ENCODE measurements at regions of chr1 and their contacts with region 1.

Region 1: DNA sequence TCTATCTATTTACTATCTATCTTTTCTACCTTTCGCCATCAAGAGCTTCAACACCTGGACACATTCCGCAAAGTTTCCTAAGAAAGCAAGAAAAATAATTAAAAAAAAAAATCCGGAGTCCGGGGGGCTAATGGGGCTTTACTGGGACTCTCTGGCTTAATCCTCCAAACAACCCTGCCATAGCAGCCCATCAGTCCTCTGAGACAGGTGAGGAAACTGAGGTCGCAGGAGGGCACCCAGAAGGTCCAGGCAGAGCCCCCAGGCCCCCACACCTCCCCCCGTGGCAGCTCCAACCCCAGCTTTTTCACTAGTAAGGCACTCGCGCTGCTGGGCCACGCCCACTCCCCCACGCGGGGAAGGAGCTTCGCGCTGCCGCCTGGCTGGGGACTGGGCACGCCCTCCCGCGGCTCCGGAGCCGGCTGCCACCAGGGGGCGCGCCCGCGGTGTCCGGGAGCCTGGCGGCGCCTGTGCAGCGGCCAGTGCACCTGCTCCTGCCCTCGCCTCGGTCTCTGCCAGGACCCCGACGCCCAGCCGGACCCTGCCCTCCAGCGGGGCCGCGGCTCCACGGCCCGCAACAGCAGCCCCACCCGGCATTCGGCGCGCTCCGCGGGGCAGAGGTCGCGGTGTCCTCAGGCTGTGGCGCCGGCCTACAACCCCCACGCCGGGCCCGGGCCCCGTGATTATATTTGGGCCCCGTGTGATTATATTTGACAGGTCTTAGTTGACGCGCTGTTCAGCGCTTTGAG is 54.1 kb upstream of the SAMD11 start:
- DNase-seq: peak; percentile 82
- H3K4me3 Mint-ChIP-seq: no peak overlapping the region
- H3K27ac Mint-ChIP-seq: no peak overlapping the region
- H3K4me1 Mint-ChIP-seq: peaks cover 8% of the 10 kb centered on the region
- H3K27me3 Mint-ChIP-seq: peaks cover 26% of the 10 kb centered on the region

Region 2: GRCh38 chr1:975896-976683 is 106.4 kb after region 1 on chr1:
- intact Hi-C with region 1: loop called (anchors 1 kb)
- DNase-seq: peak; percentile 56
- H3K4me3 Mint-ChIP-seq: no peak overlapping the region
- H3K27ac Mint-ChIP-seq: no peak overlapping the region
- H3K4me1 Mint-ChIP-seq: no peaks in the 10 kb centered on the region
- H3K27me3 Mint-ChIP-seq: peaks cover 5% of the 10 kb centered on the region

Region 3: GRCh38 chr1:1187938-1188337 is 318.3 kb after region 1 on chr1:
- intact Hi-C with region 1: no loop called
- DNase-seq: no peak
- H3K4me3 Mint-ChIP-seq: no peak overlapping the region
- H3K27ac Mint-ChIP-seq: no peak overlapping the region
- H3K4me1 Mint-ChIP-seq: no peaks in the 10 kb centered on the region
- H3K27me3 Mint-ChIP-seq: peaks cover 18% of the 10 kb centered on the region

Region 4: GRCh38 chr1:1324521-1325287 is 455.0 kb after region 1 on chr1 and contains the starts of genes CPTP and INTS11:
- intact Hi-C with region 1: no loop called
- DNase-seq: peak; percentile 95
- H3K4me3 Mint-ChIP-seq: peak within 1 kb of the TSS; percentile 95
- H3K27ac Mint-ChIP-seq: peak within 1 kb of the TSS; percentile 92
- H3K4me1 Mint-ChIP-seq: peaks cover 20% of the 10 kb centered on the region
- H3K27me3 Mint-ChIP-seq: no peaks in the 10 kb centered on the region
- total RNA-seq, gene CPTP: 13.6 and 14.6 TPM in 2 replicates
- total RNA-seq, gene INTS11: 144 and 147 TPM in 2 replicates